ENCODE measurements at regions of chr22 and their contacts with region 1.

Region 1: GRCh38 chr22:40436505-40437451 is 66.4 kb downstream of the SGSM3 start:
- DNase-seq: peak in 4 of 5 donors; percentile 60 to 66 (median 62)
- H3K4me3 ChIP-seq: no peak overlapping the region
- H3K4me3 Mint-ChIP-seq: peak overlapping the region in 2 of 8 donors; percentile 17 to 37
- H3K27ac ChIP-seq: no peak overlapping the region
- H3K27ac Mint-ChIP-seq: peak overlapping the region; percentile 43 to 71 (median 53)
- H3K4me1 ChIP-seq: peaks cover 23% of the 10 kb centered on the region
- H3K4me1 Mint-ChIP-seq: peaks cover 34 to 46% (median 41%) of the 10 kb centered on the region in 4 donors
- H3K27me3 ChIP-seq: no peaks in the 10 kb centered on the region
- H3K27me3 Mint-ChIP-seq: no peaks in the 10 kb centered on the region

Region 2: GRCh38 chr22:40107851-40108378 is 328.9 kb before region 1 on chr22:
- CTCF ChIA-PET with region 1: no interaction called
- POLR2A ChIA-PET with region 1: no interaction called
- intact Hi-C with region 1: no loop called
- DNase-seq: no peak
- H3K4me3 ChIP-seq: peak overlapping the region; percentile 19 to 23
- H3K4me3 Mint-ChIP-seq: peak overlapping the region; percentile 66 to 89 (median 82)
- H3K27ac ChIP-seq: peak overlapping the region; percentile 39
- H3K27ac Mint-ChIP-seq: peak overlapping the region in 6 of 7 donors; percentile 14 to 86 (median 74)
- H3K4me1 ChIP-seq: peaks cover 67% of the 10 kb centered on the region
- H3K4me1 Mint-ChIP-seq: peaks cover 66 to 95% (median 79%) of the 10 kb centered on the region in 4 donors
- H3K27me3 ChIP-seq: no peaks in the 10 kb centered on the region
- H3K27me3 Mint-ChIP-seq: no peaks in the 10 kb centered on the region

Region 3: DNA sequence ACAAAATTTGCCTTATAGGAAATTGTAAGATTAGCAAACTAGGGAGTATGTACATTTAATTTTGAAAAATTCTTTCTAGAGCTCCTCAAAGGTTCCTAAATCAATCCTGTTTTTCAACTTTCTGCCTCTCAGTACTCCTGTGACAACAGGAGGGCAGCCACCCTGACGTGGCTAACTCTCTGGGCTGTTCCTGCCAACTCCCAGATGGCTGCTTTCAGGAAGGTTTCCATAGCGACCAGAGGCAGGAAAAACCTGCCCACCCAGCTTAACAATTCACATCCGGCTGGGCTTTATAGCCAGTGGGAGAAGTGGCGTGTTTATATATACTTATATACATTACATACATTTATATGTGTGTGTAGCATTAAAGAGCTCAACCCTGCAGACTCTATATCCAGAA is 39.9 kb before region 1 on chr22:
- CTCF ChIA-PET with region 1: interaction called, 10 read pairs
- POLR2A ChIA-PET with region 1: no interaction called
- intact Hi-C with region 1: no loop called
- DNase-seq: no peak
- H3K4me3 ChIP-seq: no peak overlapping the region
- H3K4me3 Mint-ChIP-seq: peak overlapping the region in 1 of 8 donors; percentile 27
- H3K27ac ChIP-seq: no peak overlapping the region
- H3K27ac Mint-ChIP-seq: peak overlapping the region in 5 of 7 donors; percentile 22 to 74 (median 43)
- H3K4me1 ChIP-seq: peaks cover 63% of the 10 kb centered on the region
- H3K4me1 Mint-ChIP-seq: peaks cover 50 to 86% (median 68%) of the 10 kb centered on the region in 4 donors
- H3K27me3 ChIP-seq: no peaks in the 10 kb centered on the region
- H3K27me3 Mint-ChIP-seq: no peaks in the 10 kb centered on the region

Region 4: DNA sequence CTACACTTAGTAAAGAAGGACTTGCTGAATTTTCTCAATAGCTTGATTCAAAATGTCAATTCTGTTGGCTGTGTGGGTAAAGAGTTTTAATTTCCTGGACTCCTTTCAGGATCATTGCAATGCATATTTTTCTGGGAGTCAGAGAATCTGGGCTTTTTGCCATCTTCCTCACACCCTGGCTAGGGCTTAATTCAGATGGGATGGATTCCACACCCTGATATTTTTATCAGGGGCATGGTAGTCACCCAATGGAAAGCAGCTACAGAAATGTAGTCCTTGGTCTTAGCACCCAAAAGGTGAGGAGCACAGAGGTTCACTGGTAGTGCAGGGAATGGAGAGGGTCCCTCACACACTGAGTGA is 12.9 kb after region 1 on chr22:
- CTCF ChIA-PET with region 1: interaction called, 13 read pairs
- POLR2A ChIA-PET with region 1: interaction called, 4 read pairs
- intact Hi-C with region 1: no loop called
- DNase-seq: no peak
- H3K4me3 ChIP-seq: no peak overlapping the region
- H3K4me3 Mint-ChIP-seq: peak overlapping the region in 7 of 8 donors; percentile 3 to 63 (median 31)
- H3K27ac ChIP-seq: no peak overlapping the region
- H3K27ac Mint-ChIP-seq: peak overlapping the region in 6 of 7 donors; percentile 13 to 84 (median 56)
- H3K4me1 ChIP-seq: peaks cover 75% of the 10 kb centered on the region
- H3K4me1 Mint-ChIP-seq: peaks cover 51 to 92% (median 70%) of the 10 kb centered on the region in 4 donors
- H3K27me3 ChIP-seq: no peaks in the 10 kb centered on the region
- H3K27me3 Mint-ChIP-seq: no peaks in the 10 kb centered on the region

Region 5: GRCh38 chr22:40473703-40474102 is 36.9 kb after region 1 on chr22:
- CTCF ChIA-PET with region 1: interaction called, 67 read pairs
- POLR2A ChIA-PET with region 1: interaction called, 4 read pairs
- intact Hi-C with region 1: loop called (anchors 2 kb)
- DNase-seq: no peak
- H3K4me3 ChIP-seq: no peak overlapping the region
- H3K4me3 Mint-ChIP-seq: no peak overlapping the region
- H3K27ac ChIP-seq: no peak overlapping the region
- H3K27ac Mint-ChIP-seq: no peak overlapping the region
- H3K4me1 ChIP-seq: peaks cover 11% of the 10 kb centered on the region
- H3K4me1 Mint-ChIP-seq: peaks cover 7 to 29% (median 10%) of the 10 kb centered on the region in 4 donors
- H3K27me3 ChIP-seq: no peaks in the 10 kb centered on the region
- H3K27me3 Mint-ChIP-seq: no peaks in the 10 kb centered on the region

Region 6: DNA sequence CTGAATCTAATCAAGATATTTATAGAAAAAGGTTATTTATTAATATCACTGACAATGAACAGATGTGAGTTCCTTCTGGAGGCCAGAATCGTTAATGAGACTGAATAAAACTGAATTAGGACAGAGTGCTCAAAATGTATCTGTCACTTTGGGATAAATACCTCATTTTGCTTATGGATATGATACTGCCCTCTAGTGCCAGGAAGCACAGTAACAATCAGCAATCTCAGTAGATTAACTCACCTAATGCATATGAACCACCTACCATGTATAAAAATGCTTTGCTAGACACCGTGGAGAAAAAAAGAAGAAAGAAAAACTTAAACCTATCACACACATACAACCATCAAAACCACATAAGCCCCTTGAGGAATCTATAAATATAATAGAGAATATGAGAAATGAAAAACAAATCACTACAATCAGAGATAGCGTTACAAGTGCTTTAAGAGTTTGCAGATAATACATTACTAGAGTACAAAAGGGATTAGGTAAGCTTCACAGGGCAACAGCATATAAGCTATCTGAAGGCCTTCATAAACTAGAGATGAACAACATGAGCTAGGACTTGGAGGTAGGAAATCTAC is 51.0 kb after region 1 on chr22:
- CTCF ChIA-PET with region 1: interaction called, 338 read pairs
- POLR2A ChIA-PET with region 1: interaction called, 22 read pairs
- intact Hi-C with region 1: loop called (anchors 1 kb)
- DNase-seq: peak in 4 of 5 donors; percentile 33 to 45 (median 42)
- H3K4me3 ChIP-seq: no peak overlapping the region
- H3K4me3 Mint-ChIP-seq: no peak overlapping the region
- H3K27ac ChIP-seq: no peak overlapping the region
- H3K27ac Mint-ChIP-seq: peak overlapping the region in 2 of 7 donors; percentile 7 to 48
- H3K4me1 ChIP-seq: peaks cover 30% of the 10 kb centered on the region
- H3K4me1 Mint-ChIP-seq: peaks cover 26 to 34% (median 33%) of the 10 kb centered on the region in 4 donors
- H3K27me3 ChIP-seq: no peaks in the 10 kb centered on the region
- H3K27me3 Mint-ChIP-seq: no peaks in the 10 kb centered on the region

Region 7: DNA sequence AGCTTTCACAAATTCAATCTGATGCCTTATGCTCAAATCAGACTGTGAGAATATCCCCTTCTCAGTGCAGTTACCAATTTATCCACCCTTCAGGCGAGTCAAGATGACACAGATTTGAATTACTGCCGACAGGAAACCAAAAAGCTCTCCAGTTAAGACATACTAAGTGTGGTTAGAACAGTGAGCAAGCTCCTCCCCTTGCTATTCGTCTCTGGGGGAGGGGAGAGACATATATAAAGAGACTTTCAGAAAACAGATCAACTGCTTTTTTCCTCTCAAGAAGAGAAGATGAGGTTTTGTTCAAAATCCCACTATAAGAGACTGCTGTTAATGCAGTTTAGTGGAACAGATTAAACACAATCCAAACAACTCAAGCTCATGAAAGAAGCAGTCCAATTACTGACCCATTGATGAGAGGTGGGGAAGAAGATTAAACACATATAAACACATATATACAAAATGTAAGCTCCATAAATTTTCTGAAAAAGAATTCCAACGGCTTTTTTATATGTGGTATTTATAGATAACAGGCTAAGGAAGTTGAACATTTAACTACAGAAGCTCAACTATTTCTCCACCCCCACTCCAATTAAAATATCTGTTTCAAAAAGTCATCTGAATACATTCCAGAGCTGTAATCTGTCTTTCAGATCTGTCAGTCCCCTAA is 97.1 kb after region 1 on chr22:
- CTCF ChIA-PET with region 1: interaction called, 13 read pairs
- POLR2A ChIA-PET with region 1: interaction called, 6 read pairs
- intact Hi-C with region 1: loop called (anchors 5 kb)
- DNase-seq: peak; percentile 71 to 83 (median 77)
- H3K4me3 ChIP-seq: peak overlapping the region; percentile 32 to 61
- H3K4me3 Mint-ChIP-seq: peak overlapping the region; percentile 81 to 93 (median 87)
- H3K27ac ChIP-seq: peak overlapping the region; percentile 50
- H3K27ac Mint-ChIP-seq: peak overlapping the region; percentile 86 to 94 (median 92)
- H3K4me1 ChIP-seq: peaks cover 67% of the 10 kb centered on the region
- H3K4me1 Mint-ChIP-seq: peaks cover 49 to 64% (median 60%) of the 10 kb centered on the region in 4 donors
- H3K27me3 ChIP-seq: no peaks in the 10 kb centered on the region
- H3K27me3 Mint-ChIP-seq: no peaks in the 10 kb centered on the region

Region 8: GRCh38 chr22:40544758-40545157 is 108.0 kb after region 1 on chr22:
- CTCF ChIA-PET with region 1: no interaction called
- POLR2A ChIA-PET with region 1: no interaction called
- intact Hi-C with region 1: no loop called
- DNase-seq: no peak
- H3K4me3 ChIP-seq: no peak overlapping the region
- H3K4me3 Mint-ChIP-seq: no peak overlapping the region
- H3K27ac ChIP-seq: no peak overlapping the region
- H3K27ac Mint-ChIP-seq: peak overlapping the region in 1 of 7 donors; percentile 32
- H3K4me1 ChIP-seq: no peaks in the 10 kb centered on the region
- H3K4me1 Mint-ChIP-seq: peaks cover 14 to 35% (median 23%) of the 10 kb centered on the region in 4 donors
- H3K27me3 ChIP-seq: no peaks in the 10 kb centered on the region
- H3K27me3 Mint-ChIP-seq: no peaks in the 10 kb centered on the region

Region 9: DNA sequence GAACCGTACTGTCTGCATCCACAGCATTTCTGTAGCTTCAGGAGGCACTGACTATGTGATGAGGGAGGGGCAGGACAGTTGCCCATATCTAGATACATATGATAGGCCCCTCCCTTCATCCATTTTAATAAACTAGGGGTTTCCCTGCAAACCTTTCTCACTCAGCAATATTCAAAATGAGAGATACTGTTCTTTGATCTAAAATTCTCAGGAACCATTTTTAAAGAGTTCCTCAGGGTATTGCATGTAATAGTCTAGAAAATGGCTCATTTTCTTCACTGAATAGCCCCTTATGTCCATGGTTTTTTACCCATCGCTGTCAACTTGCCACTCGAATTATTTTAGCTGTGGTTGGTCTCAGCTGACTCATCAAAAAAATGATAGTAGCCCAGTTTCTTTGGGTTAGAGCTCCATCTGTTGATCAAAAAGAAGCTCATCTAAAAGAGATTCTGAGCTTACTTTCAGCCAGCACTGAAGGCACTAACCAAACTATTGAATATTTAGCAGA is 462.1 kb after region 1 on chr22:
- CTCF ChIA-PET with region 1: interaction called, 14 read pairs
- POLR2A ChIA-PET with region 1: no interaction called
- intact Hi-C with region 1: loop called (anchors 1 kb)
- DNase-seq: peak; percentile 41 to 54 (median 45)
- H3K4me3 ChIP-seq: no peak overlapping the region
- H3K4me3 Mint-ChIP-seq: peak overlapping the region in 2 of 8 donors; percentile 21 to 26
- H3K27ac ChIP-seq: no peak overlapping the region
- H3K27ac Mint-ChIP-seq: peak overlapping the region in 4 of 7 donors; percentile 1 to 67 (median 30)
- H3K4me1 ChIP-seq: peaks cover 4% of the 10 kb centered on the region
- H3K4me1 Mint-ChIP-seq: peaks cover 4 to 8% (median 7%) of the 10 kb centered on the region in 4 donors
- H3K27me3 ChIP-seq: no peaks in the 10 kb centered on the region
- H3K27me3 Mint-ChIP-seq: no peaks in the 10 kb centered on the region

Measured in CD4-positive, alpha-beta memory T cell (primary cell).